ENCODE measurements at regions of chr1 and their contacts with region 1.

Region 1: GRCh38 chr1:110106013-110106941 is 6.0 kb upstream of the UBL4B start:
- DNase-seq: peak; percentile 56
- ATAC-seq: peak; percentile 94
- H3K4me3 ChIP-seq: no peak overlapping the region
- H3K27ac ChIP-seq: no peak overlapping the region
- H3K4me1 ChIP-seq: no peaks in the 10 kb centered on the region
- H3K27me3 ChIP-seq: peaks cover 5 to 39% of the 10 kb centered on the region in 2 experiments; a peak in 4 of 5 replicates
- CTCF ChIP-seq: peak; percentile 97
- EP300 ChIP-seq: no peak
- POLR2A ChIP-seq: no peak
- RAD21 ChIP-seq: peak; percentile 81

Region 2: GRCh38 chr1:110034451-110035235 is 71.6 kb before region 1 on chr1 and contains the start of gene STRIP1:
- CTCF ChIA-PET with region 1: interaction called, 9 read pairs
- POLR2A ChIA-PET with region 1: no interaction called
- in situ Hi-C with region 1: no loop called
- intact Hi-C with region 1: loop called (anchors 2 kb)
- DNase-seq: peak; percentile 95
- ATAC-seq: peak; percentile 92
- H3K4me3 ChIP-seq: peak within 1 kb of the TSS; percentile 92 to 98 (median 97)
- H3K27ac ChIP-seq: peak within 1 kb of the TSS; percentile 84
- H3K4me1 ChIP-seq: peaks cover 38% of the 10 kb centered on the region
- H3K27me3 ChIP-seq: no peaks in the 10 kb centered on the region
- CTCF ChIP-seq: no peak
- EP300 ChIP-seq: 0 out of 4 replicates have a peak, but pooled peaks of 1 of the 2 experiments have one; percentile 49
- POLR2A ChIP-seq: peak; percentile 52 to 64
- RAD21 ChIP-seq: peak; percentile 20; the same call in 1 of the 2 replicates
- total RNA-seq, gene STRIP1: 16.3 and 27.9 TPM in 2 replicates

Region 3: GRCh38 chr1:110053557-110054428 is 52.5 kb before region 1 on chr1:
- CTCF ChIA-PET with region 1: interaction called, 20 read pairs
- POLR2A ChIA-PET with region 1: interaction called, 3 read pairs
- in situ Hi-C with region 1: loop called (anchors 5 kb)
- intact Hi-C with region 1: loop called (anchors 1 kb)
- DNase-seq: peak; percentile 21
- ATAC-seq: peak; percentile 87
- H3K4me3 ChIP-seq: no peak overlapping the region
- H3K27ac ChIP-seq: no peak overlapping the region
- H3K4me1 ChIP-seq: peaks cover 17% of the 10 kb centered on the region
- H3K27me3 ChIP-seq: no peaks in the 10 kb centered on the region
- CTCF ChIP-seq: peak; percentile 94
- EP300 ChIP-seq: no peak
- POLR2A ChIP-seq: no peak
- RAD21 ChIP-seq: peak; percentile 86

Region 4: DNA sequence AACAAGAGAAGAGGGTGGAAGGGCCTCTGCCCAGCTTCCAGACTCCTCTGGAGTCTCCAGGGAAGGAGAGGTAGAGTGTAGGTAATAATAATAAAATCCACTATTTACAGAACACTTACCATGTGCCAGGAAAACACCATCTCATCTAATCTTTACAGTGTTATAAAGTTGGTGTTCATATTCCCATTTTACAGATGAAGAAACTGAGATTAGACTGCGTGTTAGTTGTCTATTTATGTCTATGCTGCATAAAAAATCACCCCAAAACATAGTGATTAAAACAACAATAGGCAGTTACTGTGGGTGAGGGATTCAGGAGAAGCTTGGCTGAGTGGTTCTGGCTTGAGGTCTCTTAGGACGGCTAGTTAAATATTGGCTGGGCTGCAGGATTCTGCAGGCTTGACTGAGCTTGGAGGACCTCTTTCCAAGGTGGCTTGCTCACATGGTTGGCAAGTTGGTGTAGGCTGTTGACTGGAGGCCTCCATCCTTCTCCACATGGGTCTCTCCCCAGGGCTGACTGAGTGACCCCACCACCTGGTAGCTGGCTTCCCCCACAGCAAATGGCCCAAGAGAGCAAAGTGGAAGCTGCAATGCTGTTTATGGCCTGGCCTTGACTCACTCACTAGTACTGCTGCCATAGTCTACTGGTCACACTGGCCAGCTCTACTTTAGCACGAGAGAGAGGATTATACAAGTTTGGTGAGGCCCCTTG is 29.3 kb before region 1 on chr1:
- CTCF ChIA-PET with region 1: no interaction called
- POLR2A ChIA-PET with region 1: no interaction called
- in situ Hi-C with region 1: no loop called
- intact Hi-C with region 1: no loop called
- DNase-seq: no peak
- ATAC-seq: no peak
- H3K4me3 ChIP-seq: no peak overlapping the region
- H3K27ac ChIP-seq: no peak overlapping the region
- H3K4me1 ChIP-seq: no peaks in the 10 kb centered on the region
- H3K27me3 ChIP-seq: peaks cover 1 to 15% of the 10 kb centered on the region in 2 experiments; a peak in 3 of 5 replicates
- CTCF ChIP-seq: no peak
- EP300 ChIP-seq: no peak
- POLR2A ChIP-seq: no peak
- RAD21 ChIP-seq: no peak

Region 5: GRCh38 chr1:110087812-110088738 is 18.2 kb before region 1 on chr1:
- CTCF ChIA-PET with region 1: interaction called, 13 read pairs
- POLR2A ChIA-PET with region 1: no interaction called
- in situ Hi-C with region 1: no loop called
- intact Hi-C with region 1: loop called (anchors 1 kb)
- DNase-seq: peak; percentile 54
- ATAC-seq: peak; percentile 90
- H3K4me3 ChIP-seq: no peak overlapping the region
- H3K27ac ChIP-seq: no peak overlapping the region
- H3K4me1 ChIP-seq: peaks cover 14% of the 10 kb centered on the region; the same call in 1 of the 2 replicates
- H3K27me3 ChIP-seq: peaks cover 5 to 50% of the 10 kb centered on the region in 2 experiments; a peak in 3 of 5 replicates
- CTCF ChIP-seq: peak; percentile 77
- EP300 ChIP-seq: no peak
- POLR2A ChIP-seq: no peak
- RAD21 ChIP-seq: 0 out of 2 replicates have a peak, but pooled peaks have one; percentile 35

Measured in HepG2 (cell line).